ENCODE measurements at regions of chr2 and their contacts with region 1.

Region 1: GRCh38 chr2:165563468-165564225 is 94.1 kb downstream of the CSRNP3 start:
- DNase-seq: no peak
- ATAC-seq: peak; percentile 94
- H3K4me3 Mint-ChIP-seq: no peak overlapping the region
- H3K27ac Mint-ChIP-seq: no peak overlapping the region
- H3K4me1 Mint-ChIP-seq: peaks cover 28% of the 10 kb centered on the region
- H3K27me3 Mint-ChIP-seq: no peaks in the 10 kb centered on the region
- CTCF ChIP-seq: peak; percentile 49

Region 2: GRCh38 chr2:165274698-165275097 is 288.9 kb before region 1 on chr2:
- CTCF ChIA-PET with region 1: no interaction called
- POLR2A ChIA-PET with region 1: no interaction called
- DNase-seq: no peak
- ATAC-seq: no peak
- H3K4me3 Mint-ChIP-seq: no peak overlapping the region
- H3K27ac Mint-ChIP-seq: no peak overlapping the region
- H3K4me1 Mint-ChIP-seq: no peaks in the 10 kb centered on the region
- H3K27me3 Mint-ChIP-seq: no peaks in the 10 kb centered on the region
- CTCF ChIP-seq: no peak

Region 3: GRCh38 chr2:165549619-165550018 is 14.0 kb before region 1 on chr2:
- CTCF ChIA-PET with region 1: interaction called, 15 read pairs
- POLR2A ChIA-PET with region 1: no interaction called
- DNase-seq: no peak
- ATAC-seq: no peak
- H3K4me3 Mint-ChIP-seq: no peak overlapping the region
- H3K27ac Mint-ChIP-seq: peak overlapping the region; percentile 20; the same call in 1 of the 2 replicates
- H3K4me1 Mint-ChIP-seq: peaks cover 24% of the 10 kb centered on the region
- H3K27me3 Mint-ChIP-seq: no peaks in the 10 kb centered on the region
- CTCF ChIP-seq: no peak

Measured in WTC11 (cell line).